IMR-90 (cell line): ENCODE measurements at regions of chr18 and their contacts with region 1.

Region 1: DNA sequence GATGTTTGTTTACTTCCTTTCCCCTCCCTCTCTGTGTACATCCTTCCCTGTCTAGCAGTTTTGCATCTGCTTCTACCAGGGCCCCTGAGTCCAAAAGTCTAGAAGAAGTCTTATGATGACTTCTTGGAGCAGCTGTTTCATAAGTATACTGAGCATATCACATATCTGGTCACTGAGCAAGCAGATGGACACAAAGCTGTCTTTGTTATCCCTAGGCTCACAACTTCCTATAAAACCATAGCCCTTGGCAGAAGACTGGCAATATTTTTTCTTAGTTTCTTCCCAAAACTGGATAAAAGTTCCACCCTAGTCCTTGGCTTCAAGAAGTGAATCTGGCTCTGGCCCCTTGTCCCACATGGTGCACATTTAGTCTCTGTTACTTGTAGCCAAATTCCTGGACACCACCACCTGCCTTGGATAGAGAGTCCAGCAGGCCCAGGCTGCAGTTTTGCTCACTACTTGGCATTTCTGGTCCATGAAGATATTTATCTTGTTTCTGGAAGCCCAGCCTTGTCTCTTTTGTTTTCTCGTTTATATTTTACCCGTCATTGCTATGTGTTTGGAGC is 22.5 kb downstream of the THOC1 start:
- DNase-seq: peak; percentile 45
- ATAC-seq: no peak
- H3K4me3 ChIP-seq: no peak overlapping the region
- H3K27ac ChIP-seq: no peak overlapping the region
- H3K4me1 ChIP-seq: no peaks in the 10 kb centered on the region
- H3K27me3 ChIP-seq: no peaks in the 10 kb centered on the region
- CTCF ChIP-seq: no peak
- POLR2A ChIP-seq: no peak
- RAD21 ChIP-seq: no peak

Region 2: DNA sequence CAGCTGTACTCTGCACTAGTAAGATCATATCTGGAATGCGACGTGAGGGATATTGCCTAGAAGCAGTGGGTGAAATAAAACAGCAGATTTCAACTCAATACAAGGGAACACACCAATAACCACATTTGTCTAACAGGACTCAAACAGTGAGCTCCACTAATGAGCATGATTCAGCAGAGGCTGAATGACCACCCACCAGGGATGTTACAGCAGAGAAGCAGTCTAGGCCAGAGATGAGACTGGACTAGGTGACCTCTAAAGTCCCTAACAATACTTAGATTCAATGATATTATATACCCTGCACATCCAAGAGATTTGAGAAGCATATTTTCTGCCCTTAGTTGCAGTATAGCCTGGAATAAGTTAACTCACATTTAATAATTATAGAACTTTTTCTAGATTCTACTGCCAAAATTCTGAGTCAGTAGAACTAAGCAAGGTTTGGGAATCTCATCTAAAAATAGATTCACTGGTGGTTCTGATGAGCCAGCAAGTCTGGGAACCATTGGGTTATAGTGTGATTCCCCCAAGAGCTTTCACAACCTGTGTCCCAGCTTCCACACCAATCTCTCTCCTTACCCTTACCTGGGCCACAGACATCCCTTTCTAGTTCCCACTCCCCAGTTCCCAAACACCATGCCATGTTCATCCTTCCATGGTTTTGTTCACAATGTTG is 16.2 kb after region 1 on chr18:
- CTCF ChIA-PET with region 1: no interaction called
- POLR2A ChIA-PET with region 1: no interaction called
- dilution Hi-C with region 1: no loop called
- in situ Hi-C with region 1: no loop called
- intact Hi-C with region 1: loop called (anchors 2 kb)
- DNase-seq: peak; percentile 15
- ATAC-seq: no peak
- H3K4me3 ChIP-seq: no peak overlapping the region
- H3K27ac ChIP-seq: no peak overlapping the region
- H3K4me1 ChIP-seq: no peaks in the 10 kb centered on the region
- H3K27me3 ChIP-seq: no peaks in the 10 kb centered on the region
- CTCF ChIP-seq: no peak
- POLR2A ChIP-seq: no peak
- RAD21 ChIP-seq: no peak